ENCODE measurements at regions of chr22 and their contacts with region 1.

Region 1: GRCh38 chr22:37218771-37219411 is 6.6 kb upstream of the SSTR3 start:
- DNase-seq: peak; percentile 86
- H3K4me3 Mint-ChIP-seq: peak overlapping the region; percentile 88
- H3K27ac Mint-ChIP-seq: peak overlapping the region; percentile 98
- H3K4me1 Mint-ChIP-seq: peaks cover 75% of the 10 kb centered on the region
- H3K27me3 Mint-ChIP-seq: no peaks in the 10 kb centered on the region

Region 2: GRCh38 chr22:36828815-36829214 is 390.1 kb before region 1 on chr22:
- CTCF ChIA-PET with region 1: no interaction called
- intact Hi-C with region 1: no loop called
- DNase-seq: peak; percentile 49
- H3K4me3 Mint-ChIP-seq: no peak overlapping the region
- H3K27ac Mint-ChIP-seq: no peak overlapping the region
- H3K4me1 Mint-ChIP-seq: peaks cover 13% of the 10 kb centered on the region
- H3K27me3 Mint-ChIP-seq: peaks cover 11% of the 10 kb centered on the region

Region 3: GRCh38 chr22:37237371-37238268 is 18.7 kb after region 1 on chr22:
- CTCF ChIA-PET with region 1: interaction called, 4 read pairs
- intact Hi-C with region 1: loop called (anchors 1 kb)
- DNase-seq: peak; percentile 33
- H3K4me3 Mint-ChIP-seq: peak overlapping the region; percentile 80
- H3K27ac Mint-ChIP-seq: peak overlapping the region; percentile 99
- H3K4me1 Mint-ChIP-seq: peaks cover 90% of the 10 kb centered on the region
- H3K27me3 Mint-ChIP-seq: no peaks in the 10 kb centered on the region

Region 4: GRCh38 chr22:37282385-37282677 is 63.4 kb after region 1 on chr22 and contains the start of gene CYTH4:
- CTCF ChIA-PET with region 1: no interaction called
- intact Hi-C with region 1: loop called (anchors 2 kb)
- DNase-seq: peak; percentile 88
- H3K4me3 Mint-ChIP-seq: peak within 1 kb of the TSS; percentile 85
- H3K27ac Mint-ChIP-seq: peak within 1 kb of the TSS; percentile 97
- H3K4me1 Mint-ChIP-seq: peaks cover 53% of the 10 kb centered on the region
- H3K27me3 Mint-ChIP-seq: no peaks in the 10 kb centered on the region
- total RNA-seq, gene CYTH4: 30.5 to 34.0 TPM

Measured in activated naive CD4-positive, alpha-beta T cell treated with anti-CD3 and anti-CD28 coated beads for 36 hours (primary cell).